H1 (cell line): ENCODE measurements at regions of chr2 and their contacts with region 1.

Region 1: DNA sequence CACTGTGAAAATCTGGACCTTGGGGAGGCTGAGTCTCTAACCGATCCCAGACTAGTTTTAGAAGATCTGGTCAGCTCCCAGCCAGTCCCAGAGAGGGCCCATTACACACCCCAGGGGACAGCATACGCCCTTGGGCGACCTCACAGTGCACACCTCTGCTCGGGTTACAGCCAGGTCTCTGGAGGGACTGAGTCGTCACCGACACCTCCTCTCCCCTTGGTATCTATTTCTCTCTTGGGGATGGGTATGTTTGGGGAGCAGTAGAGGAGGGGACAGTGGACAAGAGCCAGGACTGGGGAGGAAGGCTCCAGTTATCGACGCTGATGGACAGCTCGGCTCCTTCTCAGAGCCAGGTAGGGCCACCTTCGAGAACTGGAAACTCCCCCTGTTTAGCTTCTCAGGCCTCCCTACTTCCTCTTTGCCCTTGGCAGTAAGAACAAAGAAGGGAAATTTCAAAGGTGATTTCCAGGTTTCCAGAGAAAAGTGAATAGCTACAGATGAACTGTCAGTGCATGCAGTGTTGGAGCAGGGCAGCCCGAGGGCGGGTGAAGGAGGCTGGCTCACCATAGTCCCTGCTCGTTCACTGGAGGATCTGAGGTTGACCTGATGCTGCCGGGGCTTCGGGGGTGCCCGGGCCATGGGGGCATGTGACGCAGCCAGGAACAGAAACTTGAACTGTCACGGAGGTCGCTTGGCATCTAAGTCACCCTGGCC is 4.4 kb upstream of the SEMA4C start:
- DNase-seq: no peak
- H3K4me3 ChIP-seq: no peak overlapping the region
- H3K27ac ChIP-seq: no peak overlapping the region
- H3K4me1 ChIP-seq: peaks cover 11 to 42% (median 28%) of the 10 kb centered on the region in 4 experiments
- H3K27me3 ChIP-seq: peaks cover 0 to 3% (median 0%) of the 10 kb centered on the region in 4 experiments; a peak in 2 of 7 replicates
- CTCF ChIP-seq: no peak
- EP300 ChIP-seq: no peak
- POLR2A ChIP-seq: no peak
- RAD21 ChIP-seq: no peak

Region 2: DNA sequence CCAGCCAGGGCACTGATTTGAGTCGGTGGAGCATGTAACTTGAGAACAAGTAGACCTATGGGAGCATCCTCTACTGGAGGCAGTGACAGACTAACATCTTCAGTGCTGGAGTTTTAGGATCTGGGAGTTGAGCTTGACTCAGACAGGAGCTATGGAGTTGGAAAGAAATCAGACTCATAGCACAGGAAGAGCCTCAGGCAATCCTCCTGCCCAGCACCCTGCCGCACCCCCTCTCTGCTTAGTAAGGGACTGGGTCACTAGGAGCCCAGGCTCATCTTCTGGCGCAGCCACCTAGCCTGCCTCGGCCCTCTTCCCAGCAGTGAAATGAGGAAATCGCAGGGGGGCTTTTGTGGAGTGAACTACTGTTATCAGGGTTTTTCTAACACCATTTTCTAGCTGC is 334.1 kb before region 1 on chr2:
- CTCF ChIA-PET with region 1: no interaction called
- POLR2A ChIA-PET with region 1: no interaction called
- DNase-seq: no peak
- H3K4me3 ChIP-seq: no peak overlapping the region
- H3K27ac ChIP-seq: no peak overlapping the region
- H3K4me1 ChIP-seq: peaks cover 3 to 26% (median 18%) of the 10 kb centered on the region in 4 experiments
- H3K27me3 ChIP-seq: peaks cover 10 to 30% (median 25%) of the 10 kb centered on the region in 4 experiments; a peak in 6 of 7 replicates
- CTCF ChIP-seq: no peak
- EP300 ChIP-seq: no peak
- POLR2A ChIP-seq: no peak
- RAD21 ChIP-seq: no peak

Region 3: DNA sequence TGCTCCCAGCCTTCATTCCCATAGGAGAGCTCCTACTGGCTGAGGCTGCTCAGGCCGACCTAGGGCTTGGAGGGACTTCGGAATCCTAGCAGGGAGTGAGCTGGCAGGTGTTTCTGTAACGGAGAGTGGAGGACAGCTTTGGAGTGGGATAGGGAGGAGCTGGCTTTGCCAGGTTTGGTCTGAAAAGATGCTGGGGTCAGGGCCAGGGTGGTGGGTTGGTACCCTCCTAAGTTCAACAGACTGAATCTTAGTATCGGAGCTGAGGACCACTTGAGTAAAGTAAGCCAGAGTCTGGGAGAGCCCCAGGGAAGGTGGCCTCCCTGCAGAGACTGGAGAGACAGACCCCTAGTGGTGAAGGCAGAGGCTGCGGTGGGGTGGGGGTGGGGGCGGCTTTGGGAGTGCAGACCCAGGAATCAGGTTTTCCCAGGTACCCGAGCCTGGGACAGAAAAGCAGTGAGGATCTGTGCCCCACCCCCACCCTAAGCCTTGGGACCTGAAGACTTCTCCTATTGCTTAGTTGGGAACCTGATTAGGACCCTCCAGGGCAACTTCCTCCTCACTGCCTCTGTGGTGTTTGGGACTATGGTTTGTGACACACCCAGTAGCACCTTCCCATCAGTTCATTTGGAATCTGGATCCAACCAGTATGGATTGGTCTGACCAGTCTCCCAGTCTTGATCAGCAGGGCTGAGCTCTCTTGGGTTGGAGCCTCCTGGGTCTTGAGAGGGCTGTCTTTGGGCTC is 110.6 kb before region 1 on chr2:
- CTCF ChIA-PET with region 1: no interaction called
- POLR2A ChIA-PET with region 1: no interaction called
- DNase-seq: peak in 1 of 2 experiments; percentile 62
- H3K4me3 ChIP-seq: peak overlapping the region; percentile 35 to 63 (median 47)
- H3K27ac ChIP-seq: no peak overlapping the region; the same call in 1 of the 2 replicates
- H3K4me1 ChIP-seq: peaks cover 11 to 36% (median 26%) of the 10 kb centered on the region in 4 experiments
- H3K27me3 ChIP-seq: peaks cover 0 to 8% (median 4%) of the 10 kb centered on the region in 4 experiments; a peak in 2 of 7 replicates
- CTCF ChIP-seq: peak; percentile 31 to 58 (median 39)
- EP300 ChIP-seq: no peak
- POLR2A ChIP-seq: no peak
- RAD21 ChIP-seq: peak; percentile 1 to 31; a peak in 2 of 4 replicates

Region 4: GRCh38 chr2:96888072-96889011 is 14.1 kb after region 1 on chr2:
- CTCF ChIA-PET with region 1: interaction called, 27 read pairs
- POLR2A ChIA-PET with region 1: interaction called, 25 read pairs
- DNase-seq: no peak
- H3K4me3 ChIP-seq: no peak overlapping the region
- H3K27ac ChIP-seq: no peak overlapping the region
- H3K4me1 ChIP-seq: peaks cover 0 to 8% (median 5%) of the 10 kb centered on the region in 4 experiments; a peak in 4 of 7 replicates
- H3K27me3 ChIP-seq: peaks cover 0 to 2% (median 0%) of the 10 kb centered on the region in 4 experiments; a peak in 1 of 7 replicates
- CTCF ChIP-seq: no peak
- EP300 ChIP-seq: no peak
- POLR2A ChIP-seq: no peak
- RAD21 ChIP-seq: no peak

Region 5: GRCh38 chr2:96898641-96899412 is 24.6 kb after region 1 on chr2:
- CTCF ChIA-PET with region 1: interaction called, 11 read pairs
- POLR2A ChIA-PET with region 1: interaction called, 7 read pairs
- DNase-seq: no peak
- H3K4me3 ChIP-seq: no peak overlapping the region
- H3K27ac ChIP-seq: no peak overlapping the region
- H3K4me1 ChIP-seq: peaks cover 0 to 13% (median 6%) of the 10 kb centered on the region in 4 experiments; a peak in 3 of 7 replicates
- H3K27me3 ChIP-seq: no peaks in the 10 kb centered on the region; a peak in 1 of 7 replicates
- CTCF ChIP-seq: no peak
- EP300 ChIP-seq: no peak
- POLR2A ChIP-seq: no peak
- RAD21 ChIP-seq: no peak

Region 6: GRCh38 chr2:96945012-96945804 is 70.9 kb after region 1 on chr2:
- CTCF ChIA-PET with region 1: interaction called, 47 read pairs
- POLR2A ChIA-PET with region 1: interaction called, 6 read pairs
- DNase-seq: no peak
- H3K4me3 ChIP-seq: no peak overlapping the region
- H3K27ac ChIP-seq: no peak overlapping the region
- H3K4me1 ChIP-seq: peaks cover 0 to 3% (median 1%) of the 10 kb centered on the region in 4 experiments; a peak in 2 of 7 replicates
- H3K27me3 ChIP-seq: peaks cover 0 to 3% (median under 1%) of the 10 kb centered on the region in 4 experiments; a peak in 3 of 7 replicates
- CTCF ChIP-seq: no peak
- EP300 ChIP-seq: no peak
- POLR2A ChIP-seq: no peak
- RAD21 ChIP-seq: no peak